Gastrocnemius medialis (tissue), 4 donors: ENCODE measurements at regions of chr1 and their contacts with region 1.

Region 1: DNA sequence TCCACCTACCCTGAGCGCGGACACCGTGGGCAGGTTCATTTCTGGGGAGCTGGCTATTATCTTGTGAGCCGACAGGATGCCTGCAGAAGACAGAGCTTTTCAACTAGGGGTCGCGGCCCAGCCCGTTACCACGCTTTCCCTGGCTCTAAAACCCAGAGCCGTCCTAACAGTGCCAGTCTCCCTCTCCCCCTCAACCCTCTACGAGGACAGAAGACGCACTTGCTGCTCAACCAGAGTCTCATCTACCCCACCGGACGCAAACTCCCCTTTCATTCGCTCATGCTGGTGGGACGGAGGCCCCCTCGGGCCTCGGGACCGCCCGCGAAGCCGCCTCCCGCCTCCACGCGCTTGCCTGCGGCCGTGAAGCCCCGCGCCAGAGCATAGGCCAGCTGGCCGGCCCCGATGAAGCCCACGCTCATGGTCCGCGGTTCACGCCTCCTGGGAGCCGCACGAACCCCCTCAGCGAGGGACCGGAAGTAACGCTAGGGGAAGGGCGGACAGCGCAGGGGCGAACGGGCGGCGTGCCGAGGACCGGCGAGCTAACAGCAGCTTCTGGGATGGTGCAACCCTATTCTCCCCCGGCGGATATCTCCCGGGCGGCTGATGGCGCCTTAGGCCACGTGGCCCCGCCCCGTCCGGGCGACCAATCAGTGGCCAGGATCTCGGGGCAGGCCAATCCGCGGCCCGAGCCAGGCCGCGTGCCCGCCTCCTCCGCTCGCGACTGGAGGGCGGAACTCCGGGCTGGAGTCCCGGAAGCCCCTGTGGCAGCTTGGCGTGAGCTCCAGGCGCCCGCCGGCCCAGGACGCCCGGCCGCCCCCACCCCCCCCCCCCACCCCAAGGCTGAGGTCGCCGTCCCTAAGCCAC is at the start of gene PYCR2:
- DNase-seq: peak; percentile 91 to 97
- ATAC-seq: peak; percentile 96 to 97
- H3K4me3 ChIP-seq: peak within 1 kb of the TSS; percentile 93 to 100 (median 98)
- H3K27ac ChIP-seq: peak within 1 kb of the TSS; percentile 95 to 100 (median 98)
- H3K4me1 ChIP-seq: peaks cover 15 to 16% of the 10 kb centered on the region in 2 donors
- H3K27me3 ChIP-seq: no peaks in the 10 kb centered on the region
- CTCF ChIP-seq: no peak
- POLR2A ChIP-seq: peak; percentile 75 to 87
- total RNA-seq, gene PYCR2: 31.9 to 50.3 (median 42.5) TPM

Region 2: GRCh38 chr1:225999227-225999911 is 75.4 kb after region 1 on chr1 and contains the start of gene SDE2:
- in situ Hi-C with region 1: no loop called
- intact Hi-C with region 1: loop called (anchors 1 kb)
- DNase-seq: peak; percentile 100
- ATAC-seq: peak; percentile 85 to 87
- H3K4me3 ChIP-seq: peak within 1 kb of the TSS; percentile 73 to 90 (median 79)
- H3K27ac ChIP-seq: peak within 1 kb of the TSS; percentile 92 to 98 (median 93)
- H3K4me1 ChIP-seq: peaks cover 31 to 41% of the 10 kb centered on the region in 2 donors
- H3K27me3 ChIP-seq: no peaks in the 10 kb centered on the region
- CTCF ChIP-seq: no peak
- POLR2A ChIP-seq: peak; percentile 93 to 95
- total RNA-seq, gene SDE2: 20.1 to 30.0 (median 23.0) TPM